PC-3 (cell line): ENCODE measurements at regions of chr11 and their contacts with region 1.

Region 1: GRCh38 chr11:117946842-117947526 is 17.8 kb upstream of the TMPRSS13 start:
- DNase-seq: peak; percentile 97
- ATAC-seq: peak; percentile 98
- H3K4me3 ChIP-seq: no peak overlapping the region
- H3K27ac ChIP-seq: no peak overlapping the region
- H3K4me1 ChIP-seq: 0 out of 2 replicates have a peak, but pooled peaks cover 4% of the 10 kb centered on the region
- H3K27me3 ChIP-seq: peaks cover 31% of the 10 kb centered on the region
- CTCF ChIP-seq: peak; percentile 99

Region 2: DNA sequence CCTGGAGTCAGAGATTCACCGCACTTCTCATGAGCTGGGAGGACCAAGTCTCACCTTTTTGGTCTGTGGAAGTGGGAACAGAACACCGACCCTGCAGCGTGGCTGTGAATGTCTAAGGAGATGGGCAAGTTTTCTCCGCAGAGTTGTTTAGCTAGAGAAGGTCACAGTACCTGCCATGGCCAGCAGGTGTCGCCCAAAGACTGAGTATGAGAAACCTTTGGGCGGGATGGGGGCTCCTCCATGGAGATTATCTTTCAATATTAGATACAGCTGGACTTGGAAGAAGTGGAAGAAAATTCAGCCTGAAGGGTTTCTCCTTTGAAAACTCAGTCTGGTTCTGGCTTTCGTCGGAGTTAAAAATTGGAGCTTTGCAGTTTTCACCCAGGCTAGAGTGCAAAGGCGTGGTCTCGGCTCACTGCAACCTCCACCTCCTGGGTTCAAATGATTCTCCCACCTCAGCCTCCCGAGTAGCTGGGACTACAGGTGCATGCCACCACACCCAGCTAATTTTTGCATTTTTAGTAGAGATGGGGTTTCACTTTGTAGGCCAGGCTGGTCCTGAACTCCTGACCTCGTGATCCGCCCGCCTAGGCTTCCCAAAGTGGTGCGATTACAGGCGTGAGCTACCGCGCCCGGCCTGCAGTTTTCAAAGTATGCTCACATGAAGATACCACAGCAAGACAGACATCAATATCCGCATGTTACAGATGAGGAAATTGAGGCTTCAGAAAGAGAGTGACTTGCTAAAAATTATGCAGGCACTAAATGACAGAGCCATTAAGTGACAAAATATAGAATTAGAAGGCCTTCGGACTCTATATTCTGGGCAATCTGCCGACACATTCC is 139.3 kb before region 1 on chr11:
- CTCF ChIA-PET with region 1: interaction called, 10 read pairs
- POLR2A ChIA-PET with region 1: no interaction called
- intact Hi-C with region 1: no loop called
- DNase-seq: peak; percentile 81
- ATAC-seq: peak; percentile 73
- H3K4me3 ChIP-seq: no peak overlapping the region
- H3K27ac ChIP-seq: no peak overlapping the region
- H3K4me1 ChIP-seq: no peaks in the 10 kb centered on the region
- H3K27me3 ChIP-seq: peaks cover 55% of the 10 kb centered on the region
- CTCF ChIP-seq: peak; percentile 94

Region 3: DNA sequence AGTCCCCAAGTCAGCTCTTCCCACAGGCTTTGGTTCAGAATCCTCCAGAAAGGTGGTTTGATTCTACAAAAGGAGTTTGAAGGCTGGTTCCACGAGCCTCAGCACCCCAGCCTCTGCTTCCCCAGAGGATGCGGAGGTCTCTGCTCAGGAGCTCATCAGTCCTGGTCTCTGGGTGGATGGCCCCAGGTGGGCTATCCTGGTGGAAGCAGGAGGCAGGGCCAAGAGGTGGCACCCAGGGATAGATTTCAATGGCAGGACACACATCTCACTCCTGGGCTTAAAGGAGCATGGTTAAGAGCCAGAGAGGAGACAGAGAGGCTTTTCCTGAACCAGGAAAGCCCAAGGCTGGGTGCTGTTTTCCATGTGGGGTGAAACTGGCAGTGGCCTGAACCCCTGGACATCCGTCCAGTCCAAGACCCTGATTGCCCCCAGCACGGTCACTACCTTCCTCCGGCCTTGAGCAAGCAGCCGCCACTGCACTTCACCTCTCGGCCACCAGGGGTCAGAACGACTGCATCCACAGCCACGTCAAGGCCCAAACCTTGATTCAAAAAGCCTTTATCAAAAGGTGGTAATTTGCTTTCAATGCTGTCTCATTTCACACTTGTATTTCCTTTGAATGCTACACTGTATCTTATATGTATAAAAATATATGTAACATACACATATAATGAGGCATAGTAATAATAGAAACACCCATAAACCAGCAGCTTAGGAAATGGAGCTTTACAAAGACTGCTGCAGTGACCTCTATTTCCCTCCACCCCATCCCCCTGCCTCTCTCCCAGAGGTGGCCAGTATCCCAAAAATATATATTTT is 103.1 kb before region 1 on chr11:
- CTCF ChIA-PET with region 1: interaction called, 32 read pairs
- POLR2A ChIA-PET with region 1: no interaction called
- intact Hi-C with region 1: loop called (anchors 1 kb)
- DNase-seq: peak; percentile 82
- ATAC-seq: peak; percentile 89
- H3K4me3 ChIP-seq: no peak overlapping the region
- H3K27ac ChIP-seq: no peak overlapping the region
- H3K4me1 ChIP-seq: no peaks in the 10 kb centered on the region
- H3K27me3 ChIP-seq: peaks cover 66% of the 10 kb centered on the region
- CTCF ChIP-seq: peak; percentile 97

Region 4: DNA sequence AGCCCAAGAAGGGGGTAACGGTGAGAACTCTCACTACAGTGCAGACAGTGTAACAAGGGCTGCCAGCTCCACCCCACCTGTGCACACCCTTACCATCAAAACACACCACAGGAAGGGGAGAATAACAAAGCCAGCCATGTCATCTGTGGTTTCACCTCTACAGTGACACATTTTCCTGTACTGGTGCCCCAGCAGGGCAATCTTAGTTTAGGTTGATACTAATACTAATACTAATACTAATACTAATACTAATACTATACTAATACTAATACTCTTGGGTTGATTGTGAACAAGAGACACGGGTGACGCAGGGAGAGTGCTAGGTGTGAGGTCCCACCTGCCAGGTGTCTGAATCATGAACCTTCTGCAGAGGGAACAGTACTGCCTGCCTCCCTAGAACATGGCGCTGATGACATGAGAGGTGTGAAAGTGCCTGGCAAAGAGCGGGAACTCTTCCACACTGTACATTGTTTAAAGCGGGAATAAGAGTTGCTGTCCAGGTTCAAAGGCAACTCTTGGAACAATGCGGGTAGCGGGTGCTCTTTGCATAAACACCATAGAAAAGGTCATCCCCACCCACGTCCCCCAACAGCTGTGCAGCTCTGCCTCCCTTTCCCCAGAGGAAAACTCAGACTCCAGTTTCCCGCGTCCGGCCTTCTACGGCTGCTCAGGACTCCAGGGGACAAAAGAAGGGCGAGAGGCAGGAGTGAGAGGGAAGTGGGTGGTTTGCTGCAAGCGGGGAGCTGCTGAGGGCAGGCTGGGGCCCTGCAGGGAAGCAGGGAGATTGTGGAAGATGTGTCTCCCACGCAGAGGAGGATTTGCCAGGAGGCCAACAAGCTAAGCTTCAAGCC is 104.9 kb after region 1 on chr11:
- CTCF ChIA-PET with region 1: interaction called, 6 read pairs
- POLR2A ChIA-PET with region 1: no interaction called
- intact Hi-C with region 1: loop called (anchors 10 kb)
- DNase-seq: no peak
- ATAC-seq: no peak
- H3K4me3 ChIP-seq: no peak overlapping the region
- H3K27ac ChIP-seq: no peak overlapping the region
- H3K4me1 ChIP-seq: no peaks in the 10 kb centered on the region
- H3K27me3 ChIP-seq: peaks cover 84% of the 10 kb centered on the region
- CTCF ChIP-seq: no peak